ENCODE measurements at regions of chr9 and their contacts with region 1.

Region 1: DNA sequence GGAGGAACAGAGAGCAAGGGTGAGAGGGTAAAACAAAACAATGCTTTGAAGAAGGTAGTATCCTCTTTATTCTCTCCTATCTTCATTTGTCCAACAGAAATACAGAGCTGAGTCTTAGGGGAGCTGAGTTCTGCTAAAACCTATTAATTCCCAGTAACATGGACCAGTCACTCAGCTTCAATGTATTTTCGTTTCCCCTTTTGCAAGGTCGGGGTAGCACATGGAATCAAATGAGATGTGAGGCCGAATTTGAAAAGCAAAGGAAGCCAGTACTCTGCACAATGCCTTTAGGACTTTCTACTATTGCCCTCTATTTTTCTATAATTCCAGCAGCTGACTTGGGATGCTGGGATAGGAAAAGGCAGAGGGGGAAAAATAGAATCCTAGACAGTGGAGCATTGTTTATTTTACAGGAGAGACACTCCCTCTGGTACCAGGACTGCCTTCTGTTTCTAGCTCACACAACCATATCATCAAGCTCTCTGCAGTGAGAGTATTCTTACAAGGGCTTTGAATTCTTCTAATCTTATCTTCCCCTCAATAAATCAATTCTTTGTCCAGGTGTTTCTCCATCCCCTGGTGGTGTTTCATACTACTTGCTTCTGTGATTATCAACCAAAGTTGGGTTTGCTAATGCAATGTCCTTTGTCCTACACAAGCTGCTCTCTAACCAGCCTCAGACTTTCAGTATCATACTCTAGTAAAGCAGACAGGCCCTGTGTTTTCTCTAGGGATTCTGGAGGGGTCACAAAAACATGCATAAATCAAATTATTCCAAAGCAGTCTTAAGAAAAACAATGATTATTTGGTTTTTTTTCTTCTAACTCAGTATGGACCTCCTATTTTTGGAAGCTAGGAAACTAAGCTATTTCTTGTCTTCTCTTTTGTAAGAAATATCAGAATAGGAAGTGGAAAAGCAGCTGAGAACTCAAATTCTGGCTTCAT is 341.5 kb downstream of the OSTF1 start:
- DNase-seq: no peak
- ATAC-seq: peak; percentile 13 to 15
- H3K4me3 ChIP-seq: no peak overlapping the region
- H3K27ac ChIP-seq: peak overlapping the region; percentile 8 to 73 (median 31)
- H3K4me1 ChIP-seq: peaks cover 0 to 3% of the 10 kb centered on the region in 2 donors
- H3K27me3 ChIP-seq: no peaks in the 10 kb centered on the region
- CTCF ChIP-seq: no peak
- POLR2A ChIP-seq: no peak

Region 2: DNA sequence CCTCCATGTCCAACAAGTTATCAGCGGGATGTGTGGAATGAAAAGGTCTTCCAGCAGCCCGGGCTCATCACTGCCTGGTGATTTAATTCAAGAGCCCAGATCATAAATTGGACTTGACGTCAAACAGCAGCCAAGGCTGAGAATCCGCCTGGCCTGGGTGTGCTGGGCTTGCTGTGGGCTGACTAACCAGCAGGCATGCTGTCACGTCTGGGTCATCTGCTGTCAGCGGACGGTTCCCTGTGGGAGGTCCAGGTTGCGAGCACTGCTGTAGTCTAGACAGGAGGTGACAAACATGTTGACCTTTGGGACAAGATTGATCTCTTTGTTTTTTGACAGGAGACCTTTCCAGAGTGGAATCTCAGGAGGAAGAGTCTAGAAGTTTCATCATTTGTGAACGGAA is 51.8 kb before region 1 on chr9:
- in situ Hi-C with region 1: no loop called
- intact Hi-C with region 1: loop called (anchors 5 kb)
- DNase-seq: peak; percentile 36 to 77
- ATAC-seq: peak; percentile 51 to 70
- H3K4me3 ChIP-seq: no peak overlapping the region
- H3K27ac ChIP-seq: peak overlapping the region in 3 of 4 donors; percentile 38 to 55 (median 55)
- H3K4me1 ChIP-seq: no peaks in the 10 kb centered on the region
- H3K27me3 ChIP-seq: no peaks in the 10 kb centered on the region
- CTCF ChIP-seq: no peak
- POLR2A ChIP-seq: no peak

Region 3: GRCh38 chr9:75487856-75488718 is 58.3 kb after region 1 on chr9:
- in situ Hi-C with region 1: loop called in 1 of 4 experiments (anchors 10 kb)
- intact Hi-C with region 1: no loop called
- DNase-seq: peak in 1 of 2 donors; percentile 18
- ATAC-seq: peak; percentile 45 to 58
- H3K4me3 ChIP-seq: no peak overlapping the region
- H3K27ac ChIP-seq: peak overlapping the region in 2 of 4 donors; percentile 6 to 39
- H3K4me1 ChIP-seq: no peaks in the 10 kb centered on the region
- H3K27me3 ChIP-seq: no peaks in the 10 kb centered on the region
- CTCF ChIP-seq: no peak
- POLR2A ChIP-seq: no peak